ENCODE measurements at regions of chr18 and their contacts with region 1.

Region 1: DNA sequence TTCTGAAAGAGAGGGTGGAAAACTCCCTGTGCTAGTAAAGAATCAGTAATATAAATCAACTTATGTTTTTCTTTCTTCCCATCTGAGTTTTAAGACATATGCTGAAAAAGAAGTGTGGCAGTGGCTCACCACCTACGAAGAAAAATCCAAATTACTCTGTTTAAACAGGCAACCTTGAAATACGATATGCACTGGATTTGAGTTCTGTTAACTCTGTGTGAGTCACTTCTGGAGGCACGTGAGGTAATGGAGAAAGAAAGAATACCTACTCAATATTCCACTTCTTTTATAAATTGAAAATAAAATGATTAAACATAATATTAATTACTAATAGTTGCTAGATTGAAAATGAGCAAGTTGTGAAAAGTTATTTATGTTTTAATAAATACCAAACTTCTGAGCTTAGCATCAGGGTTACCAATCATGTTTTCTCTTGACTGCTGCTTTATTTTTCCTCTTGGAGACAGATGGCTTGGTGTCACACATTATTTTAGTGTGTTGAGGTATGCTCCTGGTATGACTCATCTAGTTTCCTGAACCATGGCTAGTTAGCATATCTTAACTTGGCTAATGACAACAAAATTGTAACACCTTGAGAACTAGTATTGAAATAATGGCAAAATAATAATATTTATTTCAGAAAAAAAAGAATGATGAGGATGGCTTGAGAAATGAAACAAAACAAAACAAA is 1705.5 kb upstream of the PIK3C3 start:
- DNase-seq: no peak
- ATAC-seq: no peak
- H3K4me3 Mint-ChIP-seq: no peak overlapping the region
- H3K27ac Mint-ChIP-seq: no peak overlapping the region
- H3K4me1 Mint-ChIP-seq: no peaks in the 10 kb centered on the region
- H3K27me3 Mint-ChIP-seq: no peaks in the 10 kb centered on the region

Region 2: GRCh38 chr18:39549144-39549543 is 700.4 kb before region 1 on chr18:
- CTCF ChIA-PET with region 1: no interaction called
- POLR2A ChIA-PET with region 1: no interaction called
- intact Hi-C with region 1: no loop called
- DNase-seq: no peak
- ATAC-seq: no peak
- H3K4me3 Mint-ChIP-seq: no peak overlapping the region
- H3K27ac Mint-ChIP-seq: no peak overlapping the region
- H3K4me1 Mint-ChIP-seq: no peaks in the 10 kb centered on the region
- H3K27me3 Mint-ChIP-seq: no peaks in the 10 kb centered on the region

Region 3: DNA sequence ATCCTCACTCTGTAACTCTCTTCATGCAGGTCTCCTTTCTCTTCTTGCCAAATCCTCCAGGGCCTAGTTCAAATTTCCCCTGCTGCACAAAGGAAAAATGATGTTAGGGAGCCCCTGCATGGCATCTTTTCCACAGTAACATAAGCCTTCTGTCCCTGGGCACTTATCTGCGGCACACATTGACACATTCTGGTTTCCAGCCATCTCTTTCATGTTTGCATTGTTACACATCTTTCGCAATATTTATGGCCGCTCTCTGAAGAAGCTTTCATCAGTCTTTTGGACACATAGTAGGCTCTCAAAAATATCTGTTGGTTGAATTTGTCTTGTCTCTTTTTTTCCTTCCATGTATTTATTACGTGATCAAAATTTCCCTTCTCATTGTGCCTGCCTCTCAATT is 100.6 kb before region 1 on chr18:
- CTCF ChIA-PET with region 1: no interaction called
- POLR2A ChIA-PET with region 1: no interaction called
- intact Hi-C with region 1: no loop called
- DNase-seq: no peak
- ATAC-seq: no peak
- H3K4me3 Mint-ChIP-seq: no peak overlapping the region
- H3K27ac Mint-ChIP-seq: no peak overlapping the region
- H3K4me1 Mint-ChIP-seq: no peaks in the 10 kb centered on the region
- H3K27me3 Mint-ChIP-seq: no peaks in the 10 kb centered on the region

Region 4: DNA sequence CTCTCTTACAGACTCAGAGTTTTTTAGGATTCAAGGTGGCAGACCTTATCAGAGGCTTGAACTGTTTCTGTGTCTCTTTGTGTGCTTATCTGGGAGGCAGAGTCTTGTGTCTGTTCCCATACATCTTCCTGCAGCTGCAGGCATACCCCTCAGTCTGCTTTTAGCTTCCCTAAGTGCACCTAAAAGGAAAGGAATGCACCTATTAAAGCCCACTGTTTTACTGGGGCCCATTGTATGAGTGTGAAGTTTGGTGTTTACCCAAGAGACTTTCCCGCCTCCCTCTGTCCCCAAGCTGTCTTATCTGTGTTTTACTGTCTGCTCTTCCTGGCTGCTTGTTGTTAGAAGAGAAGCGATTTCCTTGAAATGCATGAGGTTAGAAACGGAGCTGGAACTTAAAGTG is 51.8 kb before region 1 on chr18:
- CTCF ChIA-PET with region 1: no interaction called
- POLR2A ChIA-PET with region 1: no interaction called
- intact Hi-C with region 1: loop called in 1 of 2 experiments (anchors 10 kb)
- DNase-seq: no peak
- ATAC-seq: no peak
- H3K4me3 Mint-ChIP-seq: no peak overlapping the region
- H3K27ac Mint-ChIP-seq: no peak overlapping the region
- H3K4me1 Mint-ChIP-seq: no peaks in the 10 kb centered on the region
- H3K27me3 Mint-ChIP-seq: no peaks in the 10 kb centered on the region

Measured in activated CD4-positive, alpha-beta T cell treated with anti-CD3 and anti-CD28 coated beads for 36 hours (primary cell).